CD8-positive, alpha-beta T cell (primary cell): ENCODE measurements at regions of chr14 and their contacts with region 1.

Region 1: GRCh38 chr14:89416002-89416995 is 734 bp downstream of the FOXN3 start:
- DNase-seq: peak; percentile 97 to 100 (median 99)
- ATAC-seq: peak; percentile 71
- H3K4me3 ChIP-seq: peak overlapping the region; percentile 85 to 92
- H3K4me3 Mint-ChIP-seq: peak overlapping the region; percentile 94
- H3K27ac ChIP-seq: peak overlapping the region; percentile 75 to 77
- H3K27ac Mint-ChIP-seq: peak overlapping the region; percentile 93
- H3K4me1 ChIP-seq: peaks cover 30% of the 10 kb centered on the region
- H3K4me1 Mint-ChIP-seq: peaks cover 57% of the 10 kb centered on the region
- H3K27me3 ChIP-seq: no peaks in the 10 kb centered on the region
- H3K27me3 Mint-ChIP-seq: no peaks in the 10 kb centered on the region
- CTCF ChIP-seq: no peak

Region 2: GRCh38 chr14:89040460-89041259 is 375.6 kb before region 1 on chr14:
- CTCF ChIA-PET with region 1: no interaction called
- POLR2A ChIA-PET with region 1: no interaction called
- intact Hi-C with region 1: loop called in 1 of 2 experiments (anchors 10 kb)
- DNase-seq: peak; percentile 56 to 90 (median 74)
- ATAC-seq: peak; percentile 66
- H3K4me3 ChIP-seq: peak overlapping the region; percentile 27 to 55
- H3K4me3 Mint-ChIP-seq: peak overlapping the region; percentile 79
- H3K27ac ChIP-seq: no peak overlapping the region
- H3K27ac Mint-ChIP-seq: no peak overlapping the region
- H3K4me1 ChIP-seq: peaks cover 7% of the 10 kb centered on the region
- H3K4me1 Mint-ChIP-seq: peaks cover 7% of the 10 kb centered on the region
- H3K27me3 ChIP-seq: peaks cover 0 to 14% of the 10 kb centered on the region in 2 experiments
- H3K27me3 Mint-ChIP-seq: peaks cover 29% of the 10 kb centered on the region
- CTCF ChIP-seq: peak; percentile 90

Region 3: DNA sequence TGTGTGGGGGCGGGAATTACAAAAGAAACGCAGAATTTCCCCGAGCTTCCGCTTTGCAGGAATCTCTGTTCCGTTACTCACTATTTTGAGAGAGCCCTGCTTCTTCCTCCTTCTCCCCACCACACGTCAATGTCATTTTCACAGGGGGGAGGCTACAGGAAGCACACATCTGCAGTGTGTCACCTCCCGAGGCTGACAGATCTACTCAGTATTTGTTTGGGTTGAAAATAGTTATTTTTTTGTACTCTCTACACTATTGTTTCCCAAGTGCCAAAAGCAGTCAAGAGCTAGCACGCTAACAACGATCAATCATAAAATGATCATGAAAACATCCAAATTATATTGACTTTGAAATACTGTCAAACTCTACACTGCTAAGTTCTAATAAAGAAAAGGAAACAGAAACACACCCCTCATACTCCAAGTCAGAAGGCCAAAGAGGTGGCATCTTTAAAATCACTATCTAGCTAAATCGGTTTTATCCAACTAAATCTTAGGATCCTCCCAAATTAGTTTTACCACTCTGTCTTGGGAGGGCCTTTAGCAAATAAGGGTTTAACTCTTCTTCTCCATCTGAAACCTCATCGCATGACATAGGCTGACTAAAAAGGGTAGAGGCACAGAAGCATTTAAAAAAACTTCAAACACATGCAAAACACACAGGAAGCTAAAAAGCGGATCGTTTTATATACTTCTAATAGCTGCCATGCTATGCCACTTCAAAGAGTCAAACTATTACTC is 51.1 kb before region 1 on chr14:
- CTCF ChIA-PET with region 1: interaction called, 3 read pairs
- POLR2A ChIA-PET with region 1: interaction called, 4 read pairs
- intact Hi-C with region 1: loop called (anchors 1 to 2 kb)
- DNase-seq: peak in 8 of 9 experiments; percentile 33 to 88 (median 62)
- ATAC-seq: peak; percentile 92
- H3K4me3 ChIP-seq: peak overlapping the region; percentile 34 to 36
- H3K4me3 Mint-ChIP-seq: peak overlapping the region; percentile 64
- H3K27ac ChIP-seq: peak overlapping the region; percentile 60 to 73
- H3K27ac Mint-ChIP-seq: peak overlapping the region; percentile 85
- H3K4me1 ChIP-seq: peaks cover 35% of the 10 kb centered on the region
- H3K4me1 Mint-ChIP-seq: peaks cover 56% of the 10 kb centered on the region
- H3K27me3 ChIP-seq: no peaks in the 10 kb centered on the region
- H3K27me3 Mint-ChIP-seq: no peaks in the 10 kb centered on the region
- CTCF ChIP-seq: no peak

Region 4: DNA sequence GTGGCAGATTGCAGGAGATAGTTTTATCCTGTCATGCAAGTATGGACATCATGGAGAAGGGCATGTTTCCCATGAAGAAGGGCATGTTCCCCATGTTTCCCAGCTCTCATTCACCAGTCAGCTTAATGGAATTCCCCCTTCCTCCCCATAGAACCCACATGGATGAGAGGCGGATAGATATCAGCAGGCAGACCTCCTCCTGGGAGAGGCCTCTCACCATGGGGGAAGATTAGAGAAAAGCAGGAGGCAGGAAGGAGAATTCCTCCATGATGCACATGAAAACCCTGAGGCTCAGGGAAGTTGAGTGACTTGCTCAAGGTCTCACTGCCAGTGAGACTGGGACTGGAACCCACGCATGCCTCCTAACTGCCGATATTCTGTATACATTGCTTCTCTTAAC is 93.6 kb after region 1 on chr14:
- CTCF ChIA-PET with region 1: no interaction called
- POLR2A ChIA-PET with region 1: no interaction called
- intact Hi-C with region 1: loop called in 1 of 2 experiments (anchors 5 kb)
- DNase-seq: no peak
- ATAC-seq: no peak
- H3K4me3 ChIP-seq: peak overlapping the region in 1 of 2 experiments; percentile 19
- H3K4me3 Mint-ChIP-seq: peak overlapping the region; percentile 80
- H3K27ac ChIP-seq: peak overlapping the region; percentile 14 to 86
- H3K27ac Mint-ChIP-seq: peak overlapping the region; percentile 98
- H3K4me1 ChIP-seq: peaks cover 24% of the 10 kb centered on the region
- H3K4me1 Mint-ChIP-seq: peaks cover 71% of the 10 kb centered on the region
- H3K27me3 ChIP-seq: no peaks in the 10 kb centered on the region
- H3K27me3 Mint-ChIP-seq: no peaks in the 10 kb centered on the region
- CTCF ChIP-seq: no peak

Region 5: GRCh38 chr14:89720741-89721315 is 304.5 kb after region 1 on chr14:
- CTCF ChIA-PET with region 1: interaction called, 4 read pairs
- POLR2A ChIA-PET with region 1: no interaction called
- intact Hi-C with region 1: loop called (anchors 1 kb)
- DNase-seq: peak; percentile 63 to 96 (median 77)
- ATAC-seq: peak; percentile 89
- H3K4me3 ChIP-seq: peak overlapping the region; percentile 17 to 29
- H3K4me3 Mint-ChIP-seq: peak overlapping the region; percentile 64
- H3K27ac ChIP-seq: peak overlapping the region; percentile 70 to 89
- H3K27ac Mint-ChIP-seq: peak overlapping the region; percentile 97
- H3K4me1 ChIP-seq: peaks cover 86% of the 10 kb centered on the region
- H3K4me1 Mint-ChIP-seq: peaks cover 85% of the 10 kb centered on the region
- H3K27me3 ChIP-seq: no peaks in the 10 kb centered on the region
- H3K27me3 Mint-ChIP-seq: no peaks in the 10 kb centered on the region
- CTCF ChIP-seq: no peak

Region 6: GRCh38 chr14:89855961-89856656 is 439.8 kb after region 1 on chr14:
- CTCF ChIA-PET with region 1: no interaction called
- POLR2A ChIA-PET with region 1: no interaction called
- intact Hi-C with region 1: no loop called
- DNase-seq: no peak
- ATAC-seq: no peak
- H3K4me3 ChIP-seq: no peak overlapping the region
- H3K4me3 Mint-ChIP-seq: no peak overlapping the region
- H3K27ac ChIP-seq: no peak overlapping the region
- H3K27ac Mint-ChIP-seq: no peak overlapping the region
- H3K4me1 ChIP-seq: no peaks in the 10 kb centered on the region
- H3K4me1 Mint-ChIP-seq: no peaks in the 10 kb centered on the region
- H3K27me3 ChIP-seq: no peaks in the 10 kb centered on the region
- H3K27me3 Mint-ChIP-seq: no peaks in the 10 kb centered on the region
- CTCF ChIP-seq: no peak